Psoas muscle (tissue), 8 donors: ENCODE measurements at regions of chr3 and their contacts with region 1.

Region 1: GRCh38 chr3:122484985-122485384 is 29.8 kb downstream of the KPNA1 start:
- DNase-seq: peak in 1 of 2 donors; percentile 17
- ATAC-seq: peak; percentile 23 to 69 (median 41)
- H3K4me3 ChIP-seq: no peak overlapping the region
- H3K27ac ChIP-seq: peak overlapping the region; percentile 38
- H3K4me1 ChIP-seq: peaks cover 39% of the 10 kb centered on the region
- H3K27me3 ChIP-seq: no peaks in the 10 kb centered on the region
- CTCF ChIP-seq: no peak

Region 2: DNA sequence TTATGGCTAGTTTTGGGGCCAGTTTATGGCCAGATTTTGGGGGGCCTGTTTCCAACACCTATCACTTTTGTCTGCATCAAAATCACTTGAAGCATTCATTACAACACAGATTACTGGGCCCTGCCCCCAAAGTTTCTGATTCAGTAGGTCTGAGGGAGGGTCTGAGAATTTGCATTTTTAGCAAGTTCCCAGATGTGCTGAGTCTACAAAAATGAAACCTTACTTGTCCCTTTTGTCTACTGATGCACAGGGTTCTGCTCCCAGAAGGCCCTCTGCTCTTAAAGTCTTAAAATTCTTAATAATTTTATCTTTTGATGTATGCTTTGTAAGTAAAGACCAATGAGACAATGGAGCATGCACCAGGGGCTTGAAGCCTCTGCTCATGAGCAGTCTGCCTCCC is 1085.2 kb before region 1 on chr3:
- intact Hi-C with region 1: loop called in 1 of 2 experiments (anchors 5 kb)
- DNase-seq: no peak
- ATAC-seq: no peak
- H3K4me3 ChIP-seq: no peak overlapping the region
- H3K27ac ChIP-seq: no peak overlapping the region
- H3K4me1 ChIP-seq: no peaks in the 10 kb centered on the region
- H3K27me3 ChIP-seq: no peaks in the 10 kb centered on the region
- CTCF ChIP-seq: no peak

Region 3: DNA sequence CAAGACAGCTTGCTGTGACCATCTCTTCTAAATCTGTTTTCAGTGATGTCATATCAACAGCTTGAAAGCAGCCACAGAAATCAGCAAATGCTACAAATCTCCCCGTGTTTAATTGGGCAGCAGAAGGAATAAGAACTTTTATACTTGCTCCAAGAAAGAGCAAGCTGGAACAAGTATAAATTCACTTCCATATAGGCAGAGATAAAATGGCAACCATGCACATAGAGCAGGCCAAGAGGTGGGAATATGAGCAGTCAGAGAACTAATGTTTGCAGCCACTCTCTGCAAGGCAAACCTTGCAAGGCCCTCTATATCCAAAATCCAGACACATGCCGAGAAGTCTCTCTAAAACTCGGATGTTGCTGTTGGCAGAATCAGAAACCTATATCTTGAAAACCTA is 63.1 kb after region 1 on chr3:
- intact Hi-C with region 1: no loop called
- DNase-seq: no peak
- ATAC-seq: no peak
- H3K4me3 ChIP-seq: no peak overlapping the region
- H3K27ac ChIP-seq: no peak overlapping the region
- H3K4me1 ChIP-seq: no peaks in the 10 kb centered on the region
- H3K27me3 ChIP-seq: no peaks in the 10 kb centered on the region
- CTCF ChIP-seq: no peak